Activated T-helper 1 cell treated with anti-CD3 and anti-CD28 coated beads, Interleukin-12 subunit alpha, Interleukin-12 subunit beta, Interleukin-2, Interleukin-4 antibody, amounts not matched to agents 30 ng/mL and 10 ng/mL and 1 ng/mL, durations not matched to agents 14 hours and 24 hours and 36 hours (primary cell): ENCODE measurements at regions of chr4 and their contacts with region 1.

Region 1: GRCh38 chr4:40056716-40057585 is at the start of gene N4BP2:
- DNase-seq: peak; percentile 67
- H3K4me3 Mint-ChIP-seq: peak within 1 kb of the TSS; percentile 96
- H3K27ac Mint-ChIP-seq: peak within 1 kb of the TSS; percentile 100
- H3K4me1 Mint-ChIP-seq: peaks cover 40% of the 10 kb centered on the region
- H3K27me3 Mint-ChIP-seq: no peaks in the 10 kb centered on the region
- total RNA-seq, gene N4BP2: 28.7 and 29.0 TPM in 2 replicates

Region 2: GRCh38 chr4:39353478-39354253 is 703.3 kb before region 1 on chr4:
- intact Hi-C with region 1: loop called (anchors 2 kb)
- DNase-seq: peak; percentile 32
- H3K4me3 Mint-ChIP-seq: peak overlapping the region; percentile 80
- H3K27ac Mint-ChIP-seq: peak overlapping the region; percentile 96
- H3K4me1 Mint-ChIP-seq: peaks cover 63% of the 10 kb centered on the region
- H3K27me3 Mint-ChIP-seq: no peaks in the 10 kb centered on the region

Region 3: DNA sequence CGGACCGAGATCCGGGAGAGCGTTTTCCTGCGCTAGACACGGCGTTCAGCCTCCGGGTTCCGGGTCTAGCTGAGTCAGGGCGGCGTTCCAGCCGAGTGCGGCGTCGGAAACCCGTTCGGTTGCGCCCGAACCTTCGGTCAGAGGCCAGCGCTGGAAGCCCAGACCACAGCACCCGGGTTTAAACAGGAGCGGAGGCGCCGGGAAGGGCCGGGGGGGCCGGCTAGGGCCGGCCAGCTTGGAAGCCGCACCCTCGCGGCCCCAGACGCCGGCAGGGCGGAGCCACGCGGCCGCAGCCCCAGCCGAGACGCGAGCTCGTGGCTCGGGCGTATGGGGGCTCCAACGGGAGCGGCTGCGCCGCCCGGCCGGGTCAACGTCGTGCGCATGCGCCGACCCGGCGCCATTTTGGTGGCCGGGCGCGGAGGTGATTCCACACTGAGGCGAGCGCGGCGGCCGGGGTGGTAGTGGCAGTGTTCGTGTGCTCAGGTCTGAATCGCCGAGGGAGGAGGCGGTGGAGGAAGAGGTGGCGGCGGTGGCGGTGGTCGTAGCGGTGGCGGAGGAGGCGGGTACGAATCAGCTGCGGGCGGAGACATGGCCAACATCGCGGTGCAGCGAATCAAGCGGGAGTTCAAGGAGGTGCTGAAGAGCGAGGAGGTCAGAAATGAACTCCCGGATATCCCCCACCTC is 359.1 kb before region 1 on chr4 and contains the start of gene UBE2K:
- intact Hi-C with region 1: loop called (anchors 1 kb)
- DNase-seq: peak; percentile 91
- H3K4me3 Mint-ChIP-seq: peak within 1 kb of the TSS; percentile 97
- H3K27ac Mint-ChIP-seq: peak within 1 kb of the TSS; percentile 97
- H3K4me1 Mint-ChIP-seq: peaks cover 37% of the 10 kb centered on the region
- H3K27me3 Mint-ChIP-seq: no peaks in the 10 kb centered on the region
- total RNA-seq, gene UBE2K: 92.2 and 96.4 TPM in 2 replicates

Region 4: GRCh38 chr4:40003986-40004385 is 53.0 kb before region 1 on chr4:
- intact Hi-C with region 1: no loop called
- DNase-seq: no peak
- H3K4me3 Mint-ChIP-seq: no peak overlapping the region
- H3K27ac Mint-ChIP-seq: no peak overlapping the region
- H3K4me1 Mint-ChIP-seq: no peaks in the 10 kb centered on the region
- H3K27me3 Mint-ChIP-seq: no peaks in the 10 kb centered on the region

Region 5: DNA sequence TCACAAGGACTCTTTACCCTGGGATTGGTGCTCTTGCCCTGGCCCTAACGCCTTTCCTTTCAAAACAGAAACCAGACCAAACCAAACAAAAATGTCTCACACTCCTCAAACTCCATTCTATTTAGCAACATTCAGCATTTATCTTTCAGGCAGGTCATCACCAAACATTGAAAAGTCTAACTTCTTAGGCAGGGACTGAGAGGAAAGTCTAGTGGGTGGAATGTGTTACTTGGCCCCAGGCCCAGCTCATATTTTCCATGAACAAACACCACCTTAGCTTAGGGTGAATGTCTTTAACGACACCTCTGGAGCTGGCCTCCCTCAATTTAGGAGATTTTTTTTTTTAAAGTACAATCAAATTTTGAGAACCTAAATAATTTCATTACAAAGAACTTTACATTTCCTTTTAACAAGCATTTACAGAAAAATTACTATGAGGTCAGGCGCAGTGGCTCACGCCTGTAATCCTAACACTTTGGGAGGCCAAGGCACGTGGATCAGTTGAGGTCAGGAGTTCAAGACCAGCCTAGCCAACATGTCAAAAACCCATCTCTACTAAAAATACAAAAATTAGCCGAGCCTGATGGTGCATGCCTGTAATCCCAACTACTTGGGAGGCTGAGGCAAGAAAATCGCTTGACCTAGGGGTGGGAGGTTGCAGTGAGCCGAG is 10.5 kb before region 1 on chr4:
- intact Hi-C with region 1: loop called (anchors 1 kb)
- DNase-seq: peak; percentile 8
- H3K4me3 Mint-ChIP-seq: peak overlapping the region; percentile 24
- H3K27ac Mint-ChIP-seq: peak overlapping the region; percentile 94
- H3K4me1 Mint-ChIP-seq: peaks cover 23% of the 10 kb centered on the region
- H3K27me3 Mint-ChIP-seq: no peaks in the 10 kb centered on the region

Region 6: DNA sequence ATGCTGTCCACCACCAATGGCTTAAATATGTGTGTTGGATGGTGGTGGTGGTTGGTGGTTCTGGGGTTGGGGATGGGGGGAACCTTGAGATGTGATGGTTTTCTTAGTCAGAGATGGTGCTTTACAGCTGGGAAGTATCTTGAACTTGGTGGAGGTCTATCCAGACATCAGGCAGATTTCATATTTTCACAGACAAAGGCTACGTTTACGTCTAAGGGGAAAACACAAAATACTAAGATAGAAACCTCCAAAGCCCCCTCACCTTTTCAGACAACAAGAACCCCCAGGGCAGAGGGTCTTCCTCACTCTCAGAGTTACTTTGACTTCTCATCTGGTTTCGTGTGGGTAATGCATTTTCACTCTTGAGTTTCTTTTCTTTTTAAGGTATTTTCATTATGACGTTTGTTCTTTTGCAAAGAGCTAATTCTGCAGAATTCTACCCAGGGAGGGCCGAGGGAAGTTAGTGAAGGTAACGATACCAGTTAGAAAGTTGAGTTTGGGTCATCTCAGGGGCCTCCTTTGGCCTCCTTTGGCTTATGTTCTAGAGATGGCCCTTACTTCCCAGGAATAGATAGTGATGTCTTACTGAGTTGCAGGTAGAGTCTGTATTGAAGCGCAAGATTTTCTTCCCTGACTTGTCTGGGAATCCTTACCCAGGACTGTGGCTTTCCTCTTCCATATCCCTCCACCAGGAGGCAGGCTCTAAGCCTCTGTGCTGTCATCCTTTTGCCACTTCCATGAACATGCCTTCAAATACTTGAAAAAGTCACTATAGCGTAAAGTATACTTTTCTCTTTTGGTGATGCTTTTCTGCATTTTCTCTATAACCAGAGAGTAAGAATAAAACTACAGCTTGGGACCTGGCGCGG is 171.8 kb after region 1 on chr4:
- intact Hi-C with region 1: loop called (anchors 1 kb)
- DNase-seq: no peak
- H3K4me3 Mint-ChIP-seq: peak overlapping the region; percentile 64
- H3K27ac Mint-ChIP-seq: peak overlapping the region; percentile 90
- H3K4me1 Mint-ChIP-seq: peaks cover 88% of the 10 kb centered on the region
- H3K27me3 Mint-ChIP-seq: no peaks in the 10 kb centered on the region

Region 7: GRCh38 chr4:40515398-40516293 is 458.7 kb after region 1 on chr4:
- intact Hi-C with region 1: loop called (anchors 1 kb)
- DNase-seq: no peak
- H3K4me3 Mint-ChIP-seq: no peak overlapping the region
- H3K27ac Mint-ChIP-seq: peak overlapping the region; percentile 74
- H3K4me1 Mint-ChIP-seq: peaks cover 42% of the 10 kb centered on the region
- H3K27me3 Mint-ChIP-seq: peaks cover 3% of the 10 kb centered on the region

Region 8: DNA sequence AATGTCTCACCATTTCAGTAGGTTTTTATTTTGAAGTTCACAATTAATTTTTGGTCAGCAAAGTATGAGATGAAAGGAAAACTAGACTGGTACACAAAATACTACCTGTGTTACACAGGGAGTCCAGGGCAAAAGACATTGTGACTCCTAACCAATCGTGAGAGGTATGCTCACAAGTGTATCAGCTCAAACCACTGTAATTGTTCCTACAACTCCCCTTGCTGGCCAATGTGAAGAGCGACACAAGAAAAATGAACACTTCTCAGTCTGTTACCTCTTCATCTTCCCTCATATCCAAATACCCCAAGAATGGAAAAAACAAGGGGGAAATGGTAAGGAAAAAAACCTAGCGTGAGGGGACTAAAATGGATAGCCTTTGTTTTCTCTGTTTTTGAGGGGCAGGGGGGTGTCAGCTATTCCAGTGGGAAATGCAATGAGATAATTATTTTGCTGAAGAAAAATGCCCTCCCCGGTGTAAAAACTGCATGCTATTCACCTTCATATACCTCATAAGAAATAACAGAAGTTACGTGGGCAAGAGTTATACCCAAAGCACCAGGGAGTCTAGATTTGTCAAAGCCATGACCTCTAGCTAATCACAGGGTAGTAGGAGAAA is 662.2 kb after region 1 on chr4:
- intact Hi-C with region 1: loop called (anchors 1 kb)
- DNase-seq: no peak
- H3K4me3 Mint-ChIP-seq: no peak overlapping the region
- H3K27ac Mint-ChIP-seq: peak overlapping the region; percentile 5
- H3K4me1 Mint-ChIP-seq: peaks cover 36% of the 10 kb centered on the region
- H3K27me3 Mint-ChIP-seq: no peaks in the 10 kb centered on the region